Activated CD8-positive, alpha-beta memory T cell treated with anti-CD3 and anti-CD28 coated beads, Interleukin-2, amount 10 ng/mL, durations not matched to agents 7 days and 5 days (primary cell): ENCODE measurements at regions of chr16 and their contacts with region 1.

Region 1: GRCh38 chr16:27374804-27375425 is 27.1 kb upstream of the IL21R start:
- DNase-seq: peak; percentile 71
- ATAC-seq: peak; percentile 48
- H3K4me3 Mint-ChIP-seq: no peak overlapping the region
- H3K27ac Mint-ChIP-seq: no peak overlapping the region
- H3K4me1 Mint-ChIP-seq: peaks cover 27% of the 10 kb centered on the region
- H3K27me3 Mint-ChIP-seq: no peaks in the 10 kb centered on the region

Region 2: GRCh38 chr16:27387724-27388123 is 12.8 kb after region 1 on chr16:
- CTCF ChIA-PET with region 1: interaction called, 18 read pairs
- DNase-seq: peak; percentile 51
- ATAC-seq: peak; percentile 93
- H3K4me3 Mint-ChIP-seq: no peak overlapping the region
- H3K27ac Mint-ChIP-seq: no peak overlapping the region
- H3K4me1 Mint-ChIP-seq: peaks cover 31% of the 10 kb centered on the region
- H3K27me3 Mint-ChIP-seq: no peaks in the 10 kb centered on the region

Region 3: DNA sequence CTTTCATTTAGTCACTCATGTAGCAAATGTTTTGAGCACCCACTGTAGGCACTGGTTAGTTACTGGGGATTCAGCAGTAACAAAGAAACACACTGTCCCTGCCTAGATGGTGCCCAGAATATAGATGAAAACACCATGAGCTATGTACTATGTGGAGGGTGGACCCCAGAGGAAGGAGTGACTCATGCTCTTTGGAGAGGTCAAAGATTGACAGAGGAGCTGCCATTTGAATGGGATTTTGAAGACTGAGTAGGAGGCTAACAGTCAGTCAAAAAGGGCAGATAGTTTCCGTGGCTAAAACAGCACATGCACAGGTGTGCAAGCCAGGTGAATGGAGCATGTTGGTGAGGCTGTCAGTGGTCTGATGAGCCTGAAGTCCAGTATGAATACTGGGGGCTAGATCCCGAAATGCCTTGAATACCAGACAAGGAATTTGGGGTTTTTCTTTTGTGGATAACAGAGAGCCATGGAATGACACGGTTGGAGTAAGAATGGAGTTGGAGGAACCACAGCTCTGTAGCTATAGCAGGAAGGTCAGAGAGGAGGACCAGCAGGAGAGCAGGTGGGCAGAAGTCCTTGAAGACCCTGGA is 33.2 kb after region 1 on chr16:
- CTCF ChIA-PET with region 1: interaction called, 20 read pairs
- DNase-seq: peak; percentile 65
- ATAC-seq: peak; percentile 55
- H3K4me3 Mint-ChIP-seq: peak overlapping the region; percentile 67
- H3K27ac Mint-ChIP-seq: peak overlapping the region; percentile 89
- H3K4me1 Mint-ChIP-seq: peaks cover 78% of the 10 kb centered on the region
- H3K27me3 Mint-ChIP-seq: no peaks in the 10 kb centered on the region

Region 4: GRCh38 chr16:27625050-27625697 is 250.3 kb after region 1 on chr16:
- CTCF ChIA-PET with region 1: no interaction called
- DNase-seq: no peak
- ATAC-seq: no peak
- H3K4me3 Mint-ChIP-seq: no peak overlapping the region
- H3K27ac Mint-ChIP-seq: no peak overlapping the region
- H3K4me1 Mint-ChIP-seq: no peaks in the 10 kb centered on the region
- H3K27me3 Mint-ChIP-seq: no peaks in the 10 kb centered on the region